Aorta (tissue), 5 donors: ENCODE measurements at regions of chr4 and their contacts with region 1.

Region 1: DNA sequence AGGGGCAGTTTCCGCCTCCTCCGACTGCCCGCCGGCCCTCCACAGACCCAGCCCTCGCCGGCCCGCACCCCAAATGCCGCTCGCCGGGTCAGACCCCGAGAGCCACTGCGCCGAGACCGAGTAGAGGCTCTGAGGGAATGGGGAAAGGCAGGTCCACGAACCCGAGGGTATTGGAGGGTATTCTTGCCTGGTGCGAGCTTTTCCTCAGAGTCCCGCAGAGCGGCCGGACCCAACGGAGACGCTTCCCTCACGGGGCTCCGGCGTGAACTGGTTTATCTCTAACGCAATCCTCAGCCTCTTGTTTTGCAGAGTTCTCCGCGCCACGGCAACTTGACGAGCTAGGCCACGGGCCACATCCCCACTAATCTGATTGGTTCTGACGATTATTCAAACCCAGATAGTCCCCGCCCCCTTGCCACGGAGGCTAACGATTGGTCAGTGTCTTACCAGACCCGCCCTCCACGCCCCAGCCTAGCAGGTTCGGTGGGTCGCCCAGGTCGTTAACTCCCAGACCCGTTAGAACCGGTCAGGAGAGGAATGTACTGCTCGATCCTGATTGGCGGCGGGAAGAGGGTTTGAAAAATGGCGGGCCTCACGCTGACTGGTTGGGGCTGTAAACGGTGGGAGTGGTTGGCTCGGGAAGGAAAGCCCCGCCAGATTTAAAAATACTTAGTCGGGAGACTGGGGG is at the start of gene HMGB2:
- DNase-seq: peak; percentile 100
- ATAC-seq: peak; percentile 100
- H3K4me3 ChIP-seq: peak within 1 kb of the TSS; percentile 71 to 99
- H3K27ac ChIP-seq: peak within 1 kb of the TSS; percentile 89 to 90
- H3K4me1 ChIP-seq: no peaks in the 10 kb centered on the region
- H3K27me3 ChIP-seq: no peaks in the 10 kb centered on the region
- total RNA-seq, gene HMGB2: 33.0 to 42.5 TPM

Region 2: GRCh38 chr4:173398779-173399415 is 64.7 kb after region 1 on chr4 and contains the start of gene SCRG1:
- intact Hi-C with region 1: loop called (anchors 2 to 5 kb)
- DNase-seq: peak; percentile 61 to 82
- ATAC-seq: peak; percentile 90
- H3K4me3 ChIP-seq: peak within 1 kb of the TSS; percentile 48 to 67
- H3K27ac ChIP-seq: peak within 1 kb of the TSS; percentile 16 to 82
- H3K4me1 ChIP-seq: peaks cover 2 to 10% of the 10 kb centered on the region in 2 donors
- H3K27me3 ChIP-seq: no peaks in the 10 kb centered on the region
- total RNA-seq, gene SCRG1: 34.6 to 45.2 TPM